Gastrocnemius medialis (tissue), 4 donors: ENCODE measurements at regions of chr9 and their contacts with region 1.

Region 1: DNA sequence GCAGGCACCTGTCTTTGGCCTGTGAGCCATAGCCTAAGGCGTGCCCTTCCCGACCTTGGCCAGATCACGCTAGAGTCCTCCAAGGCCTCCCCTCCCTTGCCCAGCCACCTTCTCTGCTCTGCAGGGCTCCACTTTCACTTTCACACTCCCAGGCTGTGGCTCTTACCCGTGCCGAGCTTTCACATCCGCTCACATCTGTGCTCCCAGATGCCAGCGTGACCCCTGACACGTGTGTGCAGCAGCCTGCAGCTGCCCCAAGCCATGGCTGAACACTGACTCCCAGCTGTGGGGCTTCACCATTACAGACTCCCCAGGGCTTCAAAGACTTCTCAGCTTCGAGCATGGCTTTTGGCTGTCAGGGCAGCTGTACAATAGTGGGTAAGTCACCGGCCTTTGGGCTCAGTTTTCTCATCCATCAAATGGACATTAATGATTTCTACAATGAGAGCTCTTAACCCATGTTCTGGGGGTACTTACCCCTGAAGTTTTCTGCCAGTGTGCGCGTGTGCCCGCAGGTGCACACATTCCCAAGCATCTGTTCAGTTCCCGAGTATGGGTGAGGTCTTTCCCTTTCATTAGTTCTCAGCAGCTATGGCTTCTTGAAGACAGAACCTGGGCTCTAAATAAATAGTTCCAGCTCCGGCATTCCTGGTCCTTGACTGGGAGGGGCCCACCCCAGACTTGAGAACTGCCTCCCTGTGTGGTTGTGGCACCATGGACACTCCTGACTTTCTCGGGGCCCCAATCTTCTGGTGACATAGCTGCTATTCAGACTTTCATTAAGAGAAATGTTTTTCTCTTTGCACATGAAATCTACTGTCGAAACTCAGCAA is 118.6 kb downstream of the RGS3 start:
- DNase-seq: peak; percentile 40 to 74
- ATAC-seq: peak; percentile 40 to 79
- H3K4me3 ChIP-seq: peak overlapping the region; percentile 0 to 30 (median 8)
- H3K27ac ChIP-seq: peak overlapping the region; percentile 66 to 80 (median 76)
- H3K4me1 ChIP-seq: peaks cover 41 to 56% of the 10 kb centered on the region in 2 donors
- H3K27me3 ChIP-seq: no peaks in the 10 kb centered on the region
- CTCF ChIP-seq: peak in 4 of 5 experiments; percentile 10 to 52 (median 41)
- POLR2A ChIP-seq: no peak

Region 2: DNA sequence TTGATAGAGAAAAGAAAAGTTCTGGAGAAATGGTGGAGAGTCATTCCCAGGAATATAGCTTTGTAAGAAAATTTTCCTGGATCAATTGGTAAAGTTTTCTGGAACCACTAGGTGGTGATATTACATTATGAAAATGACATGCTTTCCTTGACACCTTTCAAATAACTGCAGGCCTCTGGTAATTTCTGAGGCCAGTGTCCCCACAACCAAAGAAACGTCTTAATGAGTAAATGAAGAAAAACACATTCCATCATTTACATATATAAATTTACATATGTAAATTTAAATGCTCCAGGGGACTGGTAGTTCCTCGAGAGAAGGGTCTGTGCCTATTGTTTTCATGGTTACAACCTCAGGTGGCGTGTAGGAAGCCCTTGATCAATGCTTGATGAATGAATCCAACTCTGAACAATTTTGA is 135.7 kb before region 1 on chr9:
- in situ Hi-C with region 1: loop called in 1 of 4 experiments (anchors 10 kb)
- intact Hi-C with region 1: loop called (anchors 2 kb)
- DNase-seq: no peak
- ATAC-seq: peak; percentile 65 to 90
- H3K4me3 ChIP-seq: no peak overlapping the region
- H3K27ac ChIP-seq: peak overlapping the region in 1 of 4 donors; percentile 27
- H3K4me1 ChIP-seq: no peaks in the 10 kb centered on the region
- H3K27me3 ChIP-seq: no peaks in the 10 kb centered on the region
- CTCF ChIP-seq: peak; percentile 68 to 77 (median 71)
- POLR2A ChIP-seq: no peak

Region 3: GRCh38 chr9:113463418-113464285 is 118.4 kb before region 1 on chr9 and contains the start of gene RGS3:
- in situ Hi-C with region 1: no loop called
- intact Hi-C with region 1: loop called (anchors 5 kb)
- DNase-seq: peak; percentile 60 to 79
- ATAC-seq: peak; percentile 89 to 91
- H3K4me3 ChIP-seq: peak within 1 kb of the TSS; percentile 44 to 69 (median 59)
- H3K27ac ChIP-seq: peak within 1 kb of the TSS; percentile 74 to 87 (median 82)
- H3K4me1 ChIP-seq: peaks cover 11 to 32% of the 10 kb centered on the region in 2 donors
- H3K27me3 ChIP-seq: no peaks in the 10 kb centered on the region
- CTCF ChIP-seq: peak in 2 of 5 experiments; percentile 10 to 31
- POLR2A ChIP-seq: peak; percentile 34 to 35
- total RNA-seq, gene RGS3: 5.9 to 11.8 (median 9.8) TPM